MCF 10A (cell line): ENCODE measurements at regions of chr15 and their contacts with region 1.

Region 1: GRCh38 chr15:89874926-89875564 is 18.7 kb downstream of the AP3S2 start:
- DNase-seq: peak; percentile 72
- H3K4me3 Mint-ChIP-seq: no peak overlapping the region
- H3K27ac Mint-ChIP-seq: peak overlapping the region; percentile 46
- H3K4me1 Mint-ChIP-seq: no peaks in the 10 kb centered on the region
- H3K27me3 Mint-ChIP-seq: no peaks in the 10 kb centered on the region
- CTCF ChIP-seq: peak; percentile 84

Region 2: GRCh38 chr15:89760303-89761008 is 114.6 kb before region 1 on chr15:
- CTCF ChIA-PET with region 1: interaction called, 271 read pairs
- POLR2A ChIA-PET with region 1: interaction called, 25 read pairs
- intact Hi-C with region 1: loop called (anchors 1 kb)
- DNase-seq: peak; percentile 89
- H3K4me3 Mint-ChIP-seq: no peak overlapping the region
- H3K27ac Mint-ChIP-seq: no peak overlapping the region
- H3K4me1 Mint-ChIP-seq: peaks cover 9% of the 10 kb centered on the region
- H3K27me3 Mint-ChIP-seq: no peaks in the 10 kb centered on the region
- CTCF ChIP-seq: peak; percentile 92

Region 3: GRCh38 chr15:89781891-89782618 is 93.0 kb before region 1 on chr15:
- CTCF ChIA-PET with region 1: interaction called, 11 read pairs
- POLR2A ChIA-PET with region 1: no interaction called
- intact Hi-C with region 1: no loop called
- DNase-seq: peak; percentile 84
- H3K4me3 Mint-ChIP-seq: peak overlapping the region; percentile 48
- H3K27ac Mint-ChIP-seq: peak overlapping the region; percentile 55
- H3K4me1 Mint-ChIP-seq: peaks cover 24% of the 10 kb centered on the region
- H3K27me3 Mint-ChIP-seq: no peaks in the 10 kb centered on the region
- CTCF ChIP-seq: no peak

Region 4: DNA sequence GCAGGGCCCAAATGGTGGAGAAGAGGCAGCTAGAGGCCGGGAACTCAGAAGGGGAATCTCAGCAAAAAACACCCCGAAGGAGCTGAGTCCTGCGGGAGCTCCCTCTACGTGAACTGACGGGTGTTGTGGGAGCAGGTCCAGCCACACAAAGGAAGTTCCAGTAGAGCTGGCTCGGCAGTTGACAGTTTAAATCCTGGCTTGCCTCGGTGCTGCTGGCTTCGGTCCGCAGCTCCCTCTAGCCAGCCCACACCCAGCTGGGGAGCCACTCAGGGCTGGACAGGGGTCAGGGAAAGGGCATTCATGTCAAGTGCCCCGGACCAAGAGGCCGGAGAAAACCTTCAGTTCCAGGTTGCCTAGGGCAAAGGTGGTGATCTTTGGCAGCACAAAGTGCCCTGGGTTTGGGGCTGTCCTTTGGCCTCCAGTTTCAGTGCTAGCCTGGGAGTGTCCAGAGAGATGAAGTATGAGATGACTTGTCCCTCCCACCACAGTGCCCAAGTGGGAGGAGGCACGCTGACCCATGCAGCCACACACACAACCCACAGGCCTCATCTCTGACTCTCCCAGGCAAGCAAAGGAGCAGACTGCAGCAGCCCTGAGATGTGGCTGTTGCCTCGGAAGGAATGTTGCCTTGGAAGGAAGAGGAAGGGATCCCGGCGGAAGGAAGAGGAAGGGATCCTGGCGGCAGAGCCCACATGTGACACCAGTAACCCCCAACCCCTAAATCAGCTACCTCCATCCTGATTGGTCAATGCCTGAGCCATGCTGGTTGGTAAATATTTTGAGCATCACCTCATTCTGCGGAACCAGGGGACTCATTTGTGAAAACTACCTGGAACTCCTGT is 46.6 kb before region 1 on chr15:
- CTCF ChIA-PET with region 1: interaction called, 11 read pairs
- POLR2A ChIA-PET with region 1: interaction called, 6 read pairs
- intact Hi-C with region 1: no loop called
- DNase-seq: peak; percentile 69
- H3K4me3 Mint-ChIP-seq: no peak overlapping the region
- H3K27ac Mint-ChIP-seq: peak overlapping the region; percentile 24
- H3K4me1 Mint-ChIP-seq: peaks cover 46% of the 10 kb centered on the region
- H3K27me3 Mint-ChIP-seq: no peaks in the 10 kb centered on the region
- CTCF ChIP-seq: no peak

Region 5: GRCh38 chr15:89863918-89864317 is 11.1 kb before region 1 on chr15:
- CTCF ChIA-PET with region 1: interaction called, 38 read pairs
- POLR2A ChIA-PET with region 1: interaction called, 3 read pairs
- intact Hi-C with region 1: no loop called
- DNase-seq: peak; percentile 9
- H3K4me3 Mint-ChIP-seq: no peak overlapping the region
- H3K27ac Mint-ChIP-seq: no peak overlapping the region
- H3K4me1 Mint-ChIP-seq: no peaks in the 10 kb centered on the region
- H3K27me3 Mint-ChIP-seq: no peaks in the 10 kb centered on the region
- CTCF ChIP-seq: no peak

Region 6: DNA sequence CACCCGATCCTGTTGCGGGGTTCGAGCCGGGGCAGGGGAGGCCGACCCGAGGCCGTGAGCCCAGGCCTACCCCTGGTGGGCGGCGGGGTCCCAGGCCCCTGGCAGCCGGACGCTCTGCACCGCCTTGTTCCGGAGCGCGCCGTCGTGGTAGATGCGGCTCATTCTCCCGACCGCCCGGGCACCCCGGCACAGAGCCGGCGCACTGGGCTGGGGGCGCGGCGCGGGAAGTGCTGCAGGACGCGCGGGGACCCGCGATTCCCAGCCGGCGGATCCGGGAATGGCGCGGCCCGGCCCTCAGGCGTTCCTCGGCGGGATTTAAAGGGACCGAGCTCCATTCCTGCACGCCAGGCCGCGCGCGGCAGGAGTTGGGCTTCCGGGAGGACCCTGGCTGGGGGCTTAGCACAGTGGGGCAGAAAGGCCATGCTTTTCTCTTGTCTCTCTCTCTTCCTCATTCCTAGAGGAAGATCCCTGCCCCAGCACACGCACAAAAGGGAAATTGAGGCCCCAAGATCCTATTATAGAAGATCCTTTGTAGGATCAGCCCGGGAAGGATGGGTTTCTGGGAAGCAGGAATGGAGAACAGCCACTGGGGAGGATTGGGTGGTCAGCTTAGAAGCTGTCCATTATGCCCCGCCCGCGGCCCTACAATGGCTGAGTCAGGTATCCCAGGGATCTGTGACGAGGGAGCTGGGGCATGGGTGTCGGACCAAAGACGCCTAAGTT is 37.8 kb after region 1 on chr15 and contains the start of gene ARPIN:
- CTCF ChIA-PET with region 1: no interaction called
- POLR2A ChIA-PET with region 1: no interaction called
- intact Hi-C with region 1: no loop called
- DNase-seq: peak; percentile 52
- H3K4me3 Mint-ChIP-seq: peak within 1 kb of the TSS; percentile 76
- H3K27ac Mint-ChIP-seq: no peak within 1 kb of the TSS
- H3K4me1 Mint-ChIP-seq: peaks cover 27% of the 10 kb centered on the region
- H3K27me3 Mint-ChIP-seq: no peaks in the 10 kb centered on the region
- CTCF ChIP-seq: no peak
- total RNA-seq, gene ARPIN: 7.1 and 9.9 TPM in 2 replicates